Mammary epithelial cell (primary cell): ENCODE measurements at regions of chr15 and their contacts with region 1.

Region 1: DNA sequence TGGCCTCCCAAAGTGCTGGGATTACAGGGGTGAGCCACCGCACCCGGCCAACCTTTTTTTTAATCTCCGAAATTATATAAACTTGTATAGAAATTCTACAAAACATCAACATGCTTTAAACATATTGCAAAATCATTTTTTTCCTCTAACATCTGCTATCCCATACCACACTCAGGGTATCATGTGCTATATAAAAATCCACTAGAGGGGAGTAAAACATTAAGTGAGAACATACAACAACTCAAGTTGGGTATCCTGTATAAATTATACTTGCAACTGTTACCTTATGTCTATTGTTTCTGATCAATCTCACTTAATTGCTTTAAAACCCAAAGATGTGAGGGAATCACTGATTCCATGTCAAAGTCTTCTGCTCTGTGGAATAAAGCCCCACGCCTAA is 71.9 kb upstream of the FBN1 start:
- DNase-seq: no peak
- H3K4me3 ChIP-seq: no peak overlapping the region
- H3K27ac ChIP-seq: no peak overlapping the region
- H3K4me1 ChIP-seq: peaks cover 4% of the 10 kb centered on the region
- H3K27me3 ChIP-seq: no peaks in the 10 kb centered on the region
- CTCF ChIP-seq: peak in 1 of 2 donors; percentile 22

Region 2: DNA sequence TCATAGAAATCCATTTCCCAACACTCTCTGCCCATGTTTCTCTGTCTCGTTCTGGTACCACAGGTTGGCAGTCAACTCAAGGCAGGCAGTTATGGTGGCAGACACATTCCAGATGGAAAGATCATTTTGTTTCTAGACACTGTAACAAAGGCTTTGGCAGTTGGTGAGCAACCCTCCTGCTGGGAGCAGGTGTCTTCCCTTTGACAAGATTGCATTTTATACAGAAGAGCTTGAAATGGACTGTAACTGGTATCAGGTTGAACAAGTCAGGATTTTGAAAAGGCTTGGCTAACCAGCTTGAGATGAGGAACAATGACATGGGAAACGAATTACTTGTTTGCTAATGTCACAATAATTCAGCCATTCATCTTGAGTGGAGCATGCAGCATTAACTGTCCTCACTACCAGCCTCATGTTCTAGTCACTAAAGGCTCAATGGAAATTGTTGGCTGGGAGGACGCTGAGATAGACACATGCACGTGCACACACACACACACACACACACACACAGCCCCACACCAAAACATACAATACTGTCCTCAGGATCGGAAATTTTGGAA is 830.1 kb before region 1 on chr15:
- CTCF ChIA-PET with region 1: no interaction called
- dilution Hi-C with region 1: no loop called
- in situ Hi-C with region 1: no loop called
- intact Hi-C with region 1: no loop called
- DNase-seq: no peak
- H3K4me3 ChIP-seq: no peak overlapping the region
- H3K27ac ChIP-seq: no peak overlapping the region
- H3K4me1 ChIP-seq: no peaks in the 10 kb centered on the region
- H3K27me3 ChIP-seq: no peaks in the 10 kb centered on the region
- CTCF ChIP-seq: no peak

Region 3: GRCh38 chr15:48609486-48609885 is 108.0 kb before region 1 on chr15:
- CTCF ChIA-PET with region 1: no interaction called
- dilution Hi-C with region 1: no loop called
- in situ Hi-C with region 1: no loop called
- intact Hi-C with region 1: no loop called
- DNase-seq: no peak
- H3K4me3 ChIP-seq: no peak overlapping the region
- H3K27ac ChIP-seq: no peak overlapping the region
- H3K4me1 ChIP-seq: no peaks in the 10 kb centered on the region
- H3K27me3 ChIP-seq: no peaks in the 10 kb centered on the region
- CTCF ChIP-seq: no peak

Region 4: GRCh38 chr15:48748535-48748934 is 31.1 kb after region 1 on chr15:
- CTCF ChIA-PET with region 1: no interaction called
- dilution Hi-C with region 1: no loop called
- in situ Hi-C with region 1: no loop called
- intact Hi-C with region 1: no loop called
- DNase-seq: peak; percentile 16
- H3K4me3 ChIP-seq: no peak overlapping the region
- H3K27ac ChIP-seq: no peak overlapping the region
- H3K4me1 ChIP-seq: no peaks in the 10 kb centered on the region
- H3K27me3 ChIP-seq: no peaks in the 10 kb centered on the region
- CTCF ChIP-seq: no peak

Region 5: GRCh38 chr15:48855501-48856440 is 138.3 kb after region 1 on chr15:
- CTCF ChIA-PET with region 1: no interaction called
- dilution Hi-C with region 1: no loop called
- in situ Hi-C with region 1: no loop called
- intact Hi-C with region 1: loop called (anchors 1 kb)
- DNase-seq: no peak
- H3K4me3 ChIP-seq: no peak overlapping the region
- H3K27ac ChIP-seq: no peak overlapping the region
- H3K4me1 ChIP-seq: peaks cover 5% of the 10 kb centered on the region
- H3K27me3 ChIP-seq: no peaks in the 10 kb centered on the region
- CTCF ChIP-seq: peak; percentile 47 to 70